Activated T-helper 1 cell treated with anti-CD3 and anti-CD28 coated beads, Interleukin-12 subunit alpha, Interleukin-12 subunit beta, Interleukin-2, Interleukin-4 antibody, amounts not matched to agents 30 ng/mL and 10 ng/mL and 1 ng/mL, durations not matched to agents 14 hours and 24 hours and 36 hours (primary cell): ENCODE measurements at regions of chr7 and their contacts with region 1.

Region 1: GRCh38 chr7:876167-876967 is at the start of gene GET4:
- DNase-seq: peak; percentile 98
- H3K4me3 Mint-ChIP-seq: peak within 1 kb of the TSS; percentile 93
- H3K27ac Mint-ChIP-seq: peak within 1 kb of the TSS; percentile 92
- H3K4me1 Mint-ChIP-seq: peaks cover 16% of the 10 kb centered on the region
- H3K27me3 Mint-ChIP-seq: no peaks in the 10 kb centered on the region
- total RNA-seq, gene GET4: 38.7 and 43.8 TPM in 2 replicates

Region 2: DNA sequence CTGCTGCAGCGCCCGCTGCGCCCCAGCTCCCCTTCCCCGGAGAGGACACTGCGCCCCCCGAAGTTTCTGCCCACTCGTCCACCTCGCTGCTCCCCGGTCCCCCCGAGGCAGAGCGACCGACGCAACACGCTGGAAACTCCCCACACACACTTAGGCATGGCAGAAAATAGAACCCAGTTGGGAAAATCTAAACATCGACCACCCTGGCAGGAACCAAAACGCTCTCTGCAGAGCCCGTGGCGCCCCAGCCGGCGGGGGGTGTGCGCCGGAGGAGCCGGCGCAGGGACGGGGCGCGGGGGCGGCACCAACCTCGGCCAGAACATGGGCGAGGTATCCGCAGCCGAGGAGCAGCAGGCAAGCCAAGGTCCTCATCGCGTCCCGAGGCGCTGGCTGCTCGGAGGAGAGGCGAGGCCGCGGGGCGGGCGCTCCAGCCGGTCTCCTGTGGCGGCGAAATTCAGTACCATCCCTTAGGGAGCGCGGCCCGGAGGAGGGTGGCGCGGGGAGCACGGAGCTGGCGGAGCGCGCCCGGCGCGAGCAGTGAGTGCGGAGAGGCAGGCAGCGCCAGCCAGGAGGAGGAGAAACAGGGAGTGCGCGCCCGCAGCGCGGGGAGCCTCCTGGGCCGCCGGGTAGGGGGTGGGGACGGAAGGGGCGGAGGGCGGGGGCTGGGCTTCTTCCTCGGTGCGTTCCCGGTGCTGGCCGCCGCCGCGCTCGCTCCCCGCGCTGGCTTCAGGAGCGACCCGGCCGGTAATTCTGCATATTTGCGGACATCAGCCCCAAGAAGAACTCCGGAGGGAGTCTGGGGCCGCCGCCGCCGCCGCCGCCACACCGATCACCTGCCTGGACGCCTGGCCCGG is 357.5 kb before region 1 on chr7:
- intact Hi-C with region 1: loop called (anchors 10 kb)
- DNase-seq: peak; percentile 9
- H3K4me3 Mint-ChIP-seq: peak overlapping the region; percentile 86
- H3K27ac Mint-ChIP-seq: peak overlapping the region; percentile 76
- H3K4me1 Mint-ChIP-seq: peaks cover 3% of the 10 kb centered on the region
- H3K27me3 Mint-ChIP-seq: peaks cover 22% of the 10 kb centered on the region

Region 3: GRCh38 chr7:726084-726853 is 150.1 kb before region 1 on chr7 and contains the start of gene DNAAF5:
- intact Hi-C with region 1: loop called (anchors 1 kb)
- DNase-seq: peak; percentile 84
- H3K4me3 Mint-ChIP-seq: peak within 1 kb of the TSS; percentile 92
- H3K27ac Mint-ChIP-seq: peak within 1 kb of the TSS; percentile 96
- H3K4me1 Mint-ChIP-seq: peaks cover 23% of the 10 kb centered on the region
- H3K27me3 Mint-ChIP-seq: no peaks in the 10 kb centered on the region
- total RNA-seq, gene DNAAF5: 42.7 and 52.4 TPM in 2 replicates

Region 4: DNA sequence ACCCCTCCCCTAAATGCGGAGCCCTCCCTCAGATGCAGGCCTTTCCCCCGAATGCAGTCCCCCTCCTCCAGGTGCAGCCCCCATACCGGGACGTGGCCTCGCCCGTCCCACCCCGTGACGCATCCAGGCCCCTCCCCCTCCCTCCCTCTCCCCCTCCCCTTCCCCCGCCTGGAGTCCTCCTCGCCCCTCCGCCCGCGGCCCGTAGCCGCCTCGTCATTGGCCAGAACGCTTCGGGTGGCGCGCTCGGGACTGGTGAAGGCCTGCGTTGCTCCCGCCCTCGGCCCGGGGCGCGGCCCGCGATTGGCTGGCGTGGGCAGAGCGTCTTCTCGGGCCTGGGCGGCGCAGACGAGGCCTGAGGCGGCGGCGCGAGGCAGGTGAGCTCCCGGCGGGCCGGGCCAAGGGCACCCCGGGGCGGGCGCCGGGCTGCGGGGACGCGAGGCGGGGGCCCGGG is 60.0 kb before region 1 on chr7:
- intact Hi-C with region 1: loop called (anchors 1 kb)
- DNase-seq: peak; percentile 96
- H3K4me3 Mint-ChIP-seq: no peak overlapping the region
- H3K27ac Mint-ChIP-seq: no peak overlapping the region
- H3K4me1 Mint-ChIP-seq: peaks cover 55% of the 10 kb centered on the region
- H3K27me3 Mint-ChIP-seq: peaks cover 19% of the 10 kb centered on the region

Region 5: GRCh38 chr7:854118-854775 is 22.1 kb before region 1 on chr7:
- intact Hi-C with region 1: no loop called
- DNase-seq: no peak
- H3K4me3 Mint-ChIP-seq: no peak overlapping the region
- H3K27ac Mint-ChIP-seq: no peak overlapping the region
- H3K4me1 Mint-ChIP-seq: no peaks in the 10 kb centered on the region
- H3K27me3 Mint-ChIP-seq: no peaks in the 10 kb centered on the region

Region 6: GRCh38 chr7:923108-924041 is 47.0 kb after region 1 on chr7:
- intact Hi-C with region 1: loop called (anchors 2 kb)
- DNase-seq: peak; percentile 89
- H3K4me3 Mint-ChIP-seq: peak overlapping the region; percentile 81
- H3K27ac Mint-ChIP-seq: peak overlapping the region; percentile 94
- H3K4me1 Mint-ChIP-seq: peaks cover 20% of the 10 kb centered on the region
- H3K27me3 Mint-ChIP-seq: peaks cover 4% of the 10 kb centered on the region

Region 7: DNA sequence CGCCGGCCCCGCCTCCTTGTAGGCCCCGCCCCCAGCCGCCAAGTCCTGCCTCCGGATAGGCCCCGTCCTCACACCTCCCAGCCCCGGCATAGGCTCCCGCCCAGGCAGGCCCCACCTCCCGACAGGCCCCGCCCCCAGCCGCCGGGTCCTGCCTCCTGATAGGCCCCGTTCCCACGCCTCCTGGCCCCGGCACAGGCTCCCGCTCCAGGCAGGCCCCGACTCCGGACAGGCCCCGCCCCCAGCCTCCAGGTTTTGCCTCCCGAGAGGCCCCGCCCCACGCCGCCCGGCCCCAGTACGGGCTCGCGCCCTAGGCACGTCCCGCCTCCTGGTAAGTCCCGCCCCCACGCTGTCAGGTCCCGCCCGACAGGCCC is 583.1 kb after region 1 on chr7:
- intact Hi-C with region 1: loop called (anchors 5 kb)
- DNase-seq: peak; percentile 96
- H3K4me3 Mint-ChIP-seq: peak overlapping the region; percentile 72
- H3K27ac Mint-ChIP-seq: no peak overlapping the region
- H3K4me1 Mint-ChIP-seq: no peaks in the 10 kb centered on the region
- H3K27me3 Mint-ChIP-seq: peaks cover 4% of the 10 kb centered on the region